Caco-2 (cell line): ENCODE measurements at regions of chr2 and their contacts with region 1.

Region 1: GRCh38 chr2:127906206-127906926 is 20.6 kb upstream of the AMMECR1L start:
- DNase-seq: no peak
- H3K4me3 ChIP-seq: no peak overlapping the region
- H3K4me3 Mint-ChIP-seq: no peak overlapping the region
- H3K27ac Mint-ChIP-seq: peak overlapping the region; percentile 79
- H3K4me1 ChIP-seq: peaks cover 18% of the 10 kb centered on the region
- H3K4me1 Mint-ChIP-seq: peaks cover 14% of the 10 kb centered on the region
- H3K27me3 ChIP-seq: no peaks in the 10 kb centered on the region
- H3K27me3 Mint-ChIP-seq: no peaks in the 10 kb centered on the region
- CTCF ChIP-seq: no peak

Region 2: DNA sequence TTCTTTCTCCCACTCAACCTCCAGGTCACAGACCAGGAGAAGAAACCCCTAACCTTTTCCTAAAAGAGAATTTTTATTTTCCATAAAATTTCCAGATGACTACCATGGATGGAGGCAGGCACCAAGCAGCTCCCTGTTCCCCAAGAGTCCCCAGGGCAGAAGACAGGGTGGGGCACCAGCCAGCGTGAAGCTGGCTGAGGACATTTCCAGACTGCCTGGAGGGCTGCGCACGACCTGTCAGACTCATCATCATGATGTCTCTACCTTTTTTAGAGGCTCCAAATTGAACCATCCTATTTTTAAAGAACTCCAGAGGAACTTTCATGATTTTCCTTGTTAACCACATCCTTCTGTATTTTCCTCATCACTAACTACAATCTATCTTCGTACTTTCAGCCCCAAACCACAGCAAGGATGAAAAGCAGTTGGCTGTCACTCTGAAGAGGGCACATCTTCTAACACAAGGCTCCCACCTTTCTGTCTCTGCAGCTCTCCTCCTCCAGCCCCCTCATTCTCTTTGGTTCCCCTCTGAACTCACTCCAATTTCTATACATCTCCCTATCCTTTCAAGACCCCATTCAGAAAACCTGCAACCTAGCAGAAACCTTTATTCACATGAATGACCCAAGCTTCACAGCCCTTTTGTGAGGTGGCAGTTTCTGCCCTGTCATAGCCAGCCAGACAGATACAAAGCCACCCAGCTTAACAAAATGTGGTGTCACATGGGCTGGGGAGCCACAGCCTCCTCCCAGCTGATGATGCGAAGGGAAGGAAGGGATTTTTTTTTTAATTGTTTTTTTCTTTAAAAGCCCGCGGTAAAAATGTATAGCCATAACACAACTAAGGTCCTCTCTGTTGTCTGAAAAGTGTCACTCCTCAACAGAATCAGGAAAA is 31.7 kb before region 1 on chr2:
- CTCF ChIA-PET with region 1: no interaction called
- POLR2A ChIA-PET with region 1: no interaction called
- intact Hi-C with region 1: no loop called
- DNase-seq: no peak
- H3K4me3 ChIP-seq: no peak overlapping the region
- H3K4me3 Mint-ChIP-seq: no peak overlapping the region
- H3K27ac Mint-ChIP-seq: no peak overlapping the region
- H3K4me1 ChIP-seq: peaks cover 12% of the 10 kb centered on the region; the same call in 1 of the 2 replicates
- H3K4me1 Mint-ChIP-seq: peaks cover 23% of the 10 kb centered on the region
- H3K27me3 ChIP-seq: no peaks in the 10 kb centered on the region
- H3K27me3 Mint-ChIP-seq: no peaks in the 10 kb centered on the region
- CTCF ChIP-seq: no peak

Region 3: GRCh38 chr2:127891811-127892210 is 14.6 kb before region 1 on chr2:
- CTCF ChIA-PET with region 1: no interaction called
- POLR2A ChIA-PET with region 1: no interaction called
- intact Hi-C with region 1: loop called (anchors 2 kb)
- DNase-seq: no peak
- H3K4me3 ChIP-seq: no peak overlapping the region
- H3K4me3 Mint-ChIP-seq: no peak overlapping the region
- H3K27ac Mint-ChIP-seq: no peak overlapping the region
- H3K4me1 ChIP-seq: peaks cover 17% of the 10 kb centered on the region
- H3K4me1 Mint-ChIP-seq: peaks cover 13% of the 10 kb centered on the region
- H3K27me3 ChIP-seq: no peaks in the 10 kb centered on the region
- H3K27me3 Mint-ChIP-seq: no peaks in the 10 kb centered on the region
- CTCF ChIP-seq: no peak

Region 4: GRCh38 chr2:128215897-128216642 is 309.7 kb after region 1 on chr2:
- CTCF ChIA-PET with region 1: no interaction called
- POLR2A ChIA-PET with region 1: no interaction called
- intact Hi-C with region 1: no loop called
- DNase-seq: no peak
- H3K4me3 ChIP-seq: no peak overlapping the region
- H3K4me3 Mint-ChIP-seq: no peak overlapping the region
- H3K27ac Mint-ChIP-seq: no peak overlapping the region
- H3K4me1 ChIP-seq: no peaks in the 10 kb centered on the region
- H3K4me1 Mint-ChIP-seq: no peaks in the 10 kb centered on the region
- H3K27me3 ChIP-seq: no peaks in the 10 kb centered on the region
- H3K27me3 Mint-ChIP-seq: no peaks in the 10 kb centered on the region
- CTCF ChIP-seq: no peak